Activated CD4-positive, alpha-beta T cell treated with anti-CD3 and anti-CD28 coated beads, Interleukin-2, amount 10 ng/mL, durations not matched to agents 24 days and 14 days (primary cell): ENCODE measurements at regions of chr4 and their contacts with region 1.

Region 1: GRCh38 chr4:70473679-70474078 is 1.7 kb downstream of the MUC7 start:
- DNase-seq: no peak
- H3K4me3 Mint-ChIP-seq: no peak overlapping the region
- H3K27ac Mint-ChIP-seq: no peak overlapping the region
- H3K4me1 Mint-ChIP-seq: no peaks in the 10 kb centered on the region
- H3K27me3 Mint-ChIP-seq: no peaks in the 10 kb centered on the region

Region 2: GRCh38 chr4:70425306-70425705 is 48.4 kb before region 1 on chr4:
- intact Hi-C with region 1: loop called (anchors 5 kb)
- DNase-seq: no peak
- H3K4me3 Mint-ChIP-seq: no peak overlapping the region
- H3K27ac Mint-ChIP-seq: no peak overlapping the region
- H3K4me1 Mint-ChIP-seq: no peaks in the 10 kb centered on the region
- H3K27me3 Mint-ChIP-seq: no peaks in the 10 kb centered on the region

Region 3: DNA sequence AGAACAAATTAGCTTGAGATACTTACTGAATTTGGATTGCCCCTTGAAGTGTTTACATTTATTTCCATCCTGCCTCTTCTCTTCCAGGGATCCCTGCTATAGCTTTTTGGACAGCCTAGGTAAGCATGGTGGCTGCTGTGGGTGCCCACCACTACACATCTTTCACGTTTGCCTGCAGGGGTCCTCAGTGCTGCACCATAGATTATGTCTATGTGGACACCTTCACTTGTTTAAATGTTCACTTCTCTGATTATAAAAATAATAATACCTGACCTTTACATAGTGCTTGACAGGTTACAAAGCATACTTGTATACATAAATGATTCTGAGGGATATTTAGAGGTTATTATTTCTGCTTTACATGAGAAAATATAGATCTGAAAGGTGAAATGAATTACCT is 797.2 kb after region 1 on chr4:
- intact Hi-C with region 1: no loop called
- DNase-seq: no peak
- H3K4me3 Mint-ChIP-seq: no peak overlapping the region
- H3K27ac Mint-ChIP-seq: no peak overlapping the region
- H3K4me1 Mint-ChIP-seq: no peaks in the 10 kb centered on the region
- H3K27me3 Mint-ChIP-seq: peaks cover 5% of the 10 kb centered on the region